ENCODE measurements at regions of chr20 and their contacts with region 1.

Region 1: DNA sequence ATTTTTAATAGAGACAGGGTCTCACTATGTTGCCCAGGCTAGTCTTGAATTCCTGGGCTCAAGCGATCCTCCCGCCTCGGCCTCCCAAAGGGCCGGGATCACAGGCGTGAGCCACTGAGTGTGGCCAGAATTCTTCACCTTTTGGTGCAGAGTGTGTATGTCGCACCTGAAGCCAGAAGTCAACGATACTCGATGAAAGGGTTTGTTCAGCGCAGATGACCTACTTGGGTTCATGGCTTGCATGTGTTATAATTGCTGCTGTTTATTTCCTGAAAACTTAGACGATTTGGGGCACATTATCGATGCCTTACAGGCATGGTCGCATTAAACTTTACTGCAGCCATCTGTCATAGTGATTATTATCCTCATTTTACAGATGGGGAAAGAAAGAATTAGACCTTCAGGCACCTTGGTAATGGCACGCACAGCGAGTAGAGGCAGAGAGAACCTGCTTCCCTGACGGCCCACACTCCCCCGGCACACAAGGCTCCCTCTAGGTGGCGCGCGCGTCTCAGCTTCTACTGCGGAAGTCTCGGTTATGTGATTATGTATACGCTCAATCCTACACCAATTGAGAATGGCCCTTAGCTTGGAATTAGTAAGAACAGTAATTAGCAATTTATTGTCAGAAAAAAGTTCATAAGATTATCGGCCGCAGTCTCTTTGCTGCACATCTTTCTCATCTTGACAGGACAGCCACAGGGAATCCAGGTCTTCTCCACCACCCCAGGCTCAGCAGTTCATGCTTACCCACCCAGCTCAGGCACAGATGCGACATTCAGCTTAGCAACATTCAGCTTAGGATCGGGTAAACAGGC is 212.8 kb upstream of the PROKR2 start:
- DNase-seq: peak; percentile 71
- H3K4me3 ChIP-seq: no peak overlapping the region
- H3K27ac ChIP-seq: no peak overlapping the region
- H3K4me1 ChIP-seq: no peaks in the 10 kb centered on the region
- H3K27me3 ChIP-seq: no peaks in the 10 kb centered on the region
- CTCF ChIP-seq: peak; percentile 92 to 97

Region 2: GRCh38 chr20:5788385-5788895 is 258.9 kb after region 1 on chr20:
- CTCF ChIA-PET with region 1: interaction called, 3 read pairs
- dilution Hi-C with region 1: no loop called
- in situ Hi-C with region 1: loop called in 1 of 2 experiments (anchors 10 kb)
- intact Hi-C with region 1: loop called (anchors 1 kb)
- DNase-seq: peak; percentile 60
- H3K4me3 ChIP-seq: no peak overlapping the region
- H3K27ac ChIP-seq: no peak overlapping the region
- H3K4me1 ChIP-seq: no peaks in the 10 kb centered on the region
- H3K27me3 ChIP-seq: no peaks in the 10 kb centered on the region
- CTCF ChIP-seq: peak; percentile 80 to 91

Region 3: GRCh38 chr20:5933802-5934436 is 404.4 kb after region 1 on chr20:
- CTCF ChIA-PET with region 1: no interaction called
- dilution Hi-C with region 1: no loop called
- in situ Hi-C with region 1: loop called (anchors 10 to 25 kb)
- intact Hi-C with region 1: loop called (anchors 1 kb)
- DNase-seq: no peak
- H3K4me3 ChIP-seq: no peak overlapping the region
- H3K27ac ChIP-seq: no peak overlapping the region
- H3K4me1 ChIP-seq: no peaks in the 10 kb centered on the region
- H3K27me3 ChIP-seq: no peaks in the 10 kb centered on the region
- CTCF ChIP-seq: peak; percentile 28 to 56

Region 4: GRCh38 chr20:6008254-6008653 is 478.7 kb after region 1 on chr20:
- CTCF ChIA-PET with region 1: interaction called, 3 read pairs
- dilution Hi-C with region 1: no loop called
- in situ Hi-C with region 1: no loop called
- intact Hi-C with region 1: loop called (anchors 1 kb)
- DNase-seq: peak; percentile 96
- H3K4me3 ChIP-seq: peak overlapping the region in 2 of 3 experiments; percentile 91 to 99
- H3K27ac ChIP-seq: peak overlapping the region; percentile 66
- H3K4me1 ChIP-seq: peaks cover 16% of the 10 kb centered on the region
- H3K27me3 ChIP-seq: no peaks in the 10 kb centered on the region
- CTCF ChIP-seq: no peak

Measured in mammary epithelial cell (primary cell).